Esophagus muscularis mucosa (tissue), 4 donors: ENCODE measurements at regions of chr14 and their contacts with region 1.

Region 1: GRCh38 chr14:104981699-104982541 is 3.7 kb upstream of the CLBA1 start:
- DNase-seq: no peak
- H3K4me3 ChIP-seq: no peak overlapping the region
- H3K27ac ChIP-seq: peak overlapping the region in 1 of 4 donors; percentile 87
- H3K4me1 ChIP-seq: peaks cover 41 to 64% (median 53%) of the 10 kb centered on the region in 4 donors
- H3K27me3 ChIP-seq: no peaks in the 10 kb centered on the region
- CTCF ChIP-seq: no peak
- EP300 ChIP-seq: no peak
- POLR2A ChIP-seq: no peak

Region 2: GRCh38 chr14:104830781-104831180 is 151.1 kb before region 1 on chr14:
- intact Hi-C with region 1: no loop called
- DNase-seq: no peak
- H3K4me3 ChIP-seq: no peak overlapping the region
- H3K27ac ChIP-seq: no peak overlapping the region
- H3K4me1 ChIP-seq: peaks cover 17 to 21% (median 20%) of the 10 kb centered on the region in 4 donors
- H3K27me3 ChIP-seq: no peaks in the 10 kb centered on the region
- CTCF ChIP-seq: no peak
- EP300 ChIP-seq: no peak
- POLR2A ChIP-seq: no peak

Region 3: GRCh38 chr14:105020815-105021655 is 39.1 kb after region 1 on chr14 and contains the start of gene CDCA4:
- intact Hi-C with region 1: loop called (anchors 2 kb)
- DNase-seq: peak; percentile 99
- H3K4me3 ChIP-seq: peak within 1 kb of the TSS; percentile 85 to 99 (median 96)
- H3K27ac ChIP-seq: peak within 1 kb of the TSS; percentile 78 to 92 (median 82)
- H3K4me1 ChIP-seq: peaks cover 23 to 41% (median 35%) of the 10 kb centered on the region in 4 donors
- H3K27me3 ChIP-seq: no peaks in the 10 kb centered on the region
- CTCF ChIP-seq: peak in 2 of 3 experiments; percentile 8 to 20
- EP300 ChIP-seq: no peak
- POLR2A ChIP-seq: peak; percentile 60
- total RNA-seq, gene CDCA4: 5.0 to 8.0 (median 6.0) TPM